ENCODE measurements at regions of chr7 and their contacts with region 1.

Region 1: GRCh38 chr7:5694912-5695726 is 86.3 kb downstream of the RNF216 start:
- DNase-seq: peak; percentile 38 to 91 (median 81)
- ATAC-seq: peak; percentile 75
- H3K4me3 ChIP-seq: peak overlapping the region; percentile 60
- H3K4me3 Mint-ChIP-seq: peak overlapping the region; percentile 88 to 99 (median 96)
- H3K27ac ChIP-seq: peak overlapping the region; percentile 86
- H3K27ac Mint-ChIP-seq: peak overlapping the region; percentile 89 to 99 (median 94)
- H3K4me1 ChIP-seq: peaks cover 45 to 88% of the 10 kb centered on the region in 2 donors
- H3K4me1 Mint-ChIP-seq: peaks cover 84 to 100% (median 93%) of the 10 kb centered on the region in 7 donors
- H3K27me3 ChIP-seq: no peaks in the 10 kb centered on the region
- H3K27me3 Mint-ChIP-seq: peaks cover 0 to 10% (median 0%) of the 10 kb centered on the region in 5 donors

Region 2: DNA sequence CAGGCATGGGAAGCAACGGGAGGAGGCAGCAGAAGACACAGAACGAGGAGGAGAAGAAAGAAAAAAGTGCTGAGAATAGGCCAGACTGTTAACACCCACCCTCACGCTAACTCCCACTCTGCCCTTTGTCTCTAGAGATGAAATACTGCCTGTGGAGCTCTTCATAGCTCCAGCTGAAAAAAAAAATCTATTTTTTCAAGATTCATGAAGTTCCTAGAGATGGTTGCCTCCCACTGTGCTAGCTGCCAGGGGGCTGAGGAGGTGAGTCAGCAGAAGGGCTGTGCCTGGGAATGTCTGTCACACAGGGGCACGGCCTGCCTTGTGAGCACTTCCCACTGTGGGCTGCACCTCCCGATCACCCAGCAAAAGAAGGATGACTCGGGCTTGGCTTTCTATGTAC is 58.2 kb before region 1 on chr7:
- CTCF ChIA-PET with region 1: no interaction called
- POLR2A ChIA-PET with region 1: no interaction called
- intact Hi-C with region 1: loop called in 1 of 2 experiments (anchors 1 kb)
- DNase-seq: no peak
- ATAC-seq: no peak
- H3K4me3 ChIP-seq: no peak overlapping the region
- H3K4me3 Mint-ChIP-seq: no peak overlapping the region
- H3K27ac ChIP-seq: no peak overlapping the region
- H3K27ac Mint-ChIP-seq: peak overlapping the region in 5 of 9 donors; percentile 19 to 86 (median 54)
- H3K4me1 ChIP-seq: peaks cover 5 to 13% of the 10 kb centered on the region in 2 donors
- H3K4me1 Mint-ChIP-seq: peaks cover 11 to 45% (median 35%) of the 10 kb centered on the region in 7 donors
- H3K27me3 ChIP-seq: no peaks in the 10 kb centered on the region
- H3K27me3 Mint-ChIP-seq: no peaks in the 10 kb centered on the region

Region 3: DNA sequence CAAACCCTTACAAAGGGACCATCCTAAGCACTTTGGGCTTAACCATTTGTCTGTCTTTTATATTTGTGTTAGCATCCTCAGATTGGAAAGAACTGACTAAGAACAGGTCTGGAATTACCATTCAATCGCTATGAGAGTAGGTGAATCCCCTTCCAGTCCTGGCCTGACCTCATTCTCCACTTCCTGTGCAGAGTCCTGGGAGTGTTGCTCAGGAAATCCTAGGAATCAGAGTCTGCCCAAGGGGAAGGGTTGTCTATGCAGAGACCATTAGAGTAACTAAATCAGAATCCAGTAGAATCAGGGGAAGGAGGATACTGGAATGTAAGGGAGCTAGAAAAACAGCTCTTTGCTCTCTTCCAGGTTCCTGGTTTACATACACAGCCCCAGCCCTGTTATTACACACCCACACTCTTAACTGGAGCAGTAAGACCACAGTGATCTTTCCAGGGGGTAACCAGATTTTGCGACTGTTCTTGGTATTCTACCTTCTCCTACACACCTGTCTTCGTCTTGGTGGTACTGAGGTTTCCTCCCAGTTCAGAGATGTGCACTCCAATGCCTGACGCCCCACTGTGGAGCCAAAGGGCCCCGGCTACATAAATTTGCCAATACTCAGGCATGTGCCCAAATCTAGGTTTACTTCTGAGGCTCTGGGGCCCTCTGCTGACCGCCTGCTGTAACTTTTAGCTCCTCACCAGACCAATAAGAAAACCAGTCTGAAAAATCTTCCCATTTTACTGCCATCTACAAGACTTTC is 17.4 kb before region 1 on chr7:
- CTCF ChIA-PET with region 1: interaction called, 8 read pairs
- POLR2A ChIA-PET with region 1: interaction called, 177 read pairs
- intact Hi-C with region 1: loop called (anchors 2 kb)
- DNase-seq: peak in 3 of 9 donors; percentile 34 to 47 (median 42)
- ATAC-seq: peak; percentile 67
- H3K4me3 ChIP-seq: no peak overlapping the region
- H3K4me3 Mint-ChIP-seq: peak overlapping the region in 1 of 10 donors; percentile 1
- H3K27ac ChIP-seq: no peak overlapping the region
- H3K27ac Mint-ChIP-seq: peak overlapping the region in 7 of 9 donors; percentile 2 to 68 (median 34)
- H3K4me1 ChIP-seq: peaks cover 5 to 14% of the 10 kb centered on the region in 2 donors
- H3K4me1 Mint-ChIP-seq: peaks cover 40 to 68% (median 57%) of the 10 kb centered on the region in 7 donors
- H3K27me3 ChIP-seq: no peaks in the 10 kb centered on the region
- H3K27me3 Mint-ChIP-seq: no peaks in the 10 kb centered on the region

Region 4: GRCh38 chr7:5780801-5781496 is 85.8 kb after region 1 on chr7:
- CTCF ChIA-PET with region 1: interaction called, 5 read pairs
- POLR2A ChIA-PET with region 1: interaction called, 3 read pairs
- intact Hi-C with region 1: loop called in 1 of 2 experiments (anchors 2 kb)
- DNase-seq: peak in 7 of 9 donors; percentile 12 to 60 (median 30)
- ATAC-seq: peak; percentile 35
- H3K4me3 ChIP-seq: peak overlapping the region; percentile 66
- H3K4me3 Mint-ChIP-seq: peak overlapping the region; percentile 72 to 92 (median 84)
- H3K27ac ChIP-seq: peak overlapping the region; percentile 92
- H3K27ac Mint-ChIP-seq: peak overlapping the region; percentile 66 to 93 (median 88)
- H3K4me1 ChIP-seq: peaks cover 24 to 25% of the 10 kb centered on the region in 2 donors
- H3K4me1 Mint-ChIP-seq: peaks cover 28 to 47% (median 42%) of the 10 kb centered on the region in 7 donors
- H3K27me3 ChIP-seq: no peaks in the 10 kb centered on the region
- H3K27me3 Mint-ChIP-seq: no peaks in the 10 kb centered on the region